CD8-positive, alpha-beta T cell (primary cell): ENCODE measurements at regions of chr10 and their contacts with region 1.

Region 1: DNA sequence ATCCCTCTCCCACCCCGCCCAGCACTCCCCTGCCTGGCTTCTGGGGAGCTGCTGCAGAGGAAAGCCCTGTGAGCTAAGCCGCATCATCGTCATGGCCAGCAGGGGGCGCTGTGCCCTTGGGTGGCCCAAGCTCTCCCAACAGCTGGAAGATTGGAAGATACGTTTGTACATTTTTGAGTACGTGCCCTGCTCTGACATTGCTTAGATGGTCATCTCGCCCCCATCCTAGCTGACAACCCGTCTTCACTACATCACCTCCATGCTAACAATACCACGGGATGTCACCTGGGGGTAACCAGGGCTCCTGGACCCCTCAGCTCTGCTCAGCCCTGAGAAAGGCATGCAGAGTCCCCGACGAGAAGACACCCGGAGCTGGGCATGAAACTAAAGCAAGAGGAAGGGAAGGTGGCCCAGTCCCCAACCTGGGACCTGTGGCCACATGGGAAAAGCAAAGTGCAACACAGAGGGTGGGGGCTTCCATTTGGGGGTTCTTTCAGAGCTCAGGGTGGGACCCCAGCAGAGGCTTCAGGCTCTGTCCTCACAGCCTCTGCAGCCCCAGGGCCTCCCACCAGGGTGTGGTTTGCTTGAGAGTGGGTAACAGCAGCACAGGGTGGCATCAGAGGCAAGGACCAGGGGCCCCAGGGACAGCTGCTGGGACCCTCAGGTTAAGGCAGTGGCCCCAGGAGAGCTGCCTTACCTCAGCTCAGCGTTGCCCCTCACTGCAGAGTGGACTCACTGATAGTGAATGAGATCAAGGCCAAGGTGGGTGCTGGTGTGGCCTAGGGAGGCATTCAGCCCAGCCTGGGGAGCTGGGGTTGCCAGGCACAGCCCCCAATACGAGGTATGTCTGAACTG is 136.7 kb downstream of the PTPN20 start:
- DNase-seq: peak; percentile 42 to 87 (median 72)
- ATAC-seq: peak; percentile 65
- H3K4me3 ChIP-seq: no peak overlapping the region
- H3K4me3 Mint-ChIP-seq: no peak overlapping the region
- H3K27ac ChIP-seq: no peak overlapping the region
- H3K27ac Mint-ChIP-seq: peak overlapping the region; percentile 49
- H3K4me1 ChIP-seq: peaks cover 16% of the 10 kb centered on the region
- H3K4me1 Mint-ChIP-seq: peaks cover 21% of the 10 kb centered on the region
- H3K27me3 ChIP-seq: no peaks in the 10 kb centered on the region
- H3K27me3 Mint-ChIP-seq: no peaks in the 10 kb centered on the region
- CTCF ChIP-seq: peak; percentile 73

Region 2: GRCh38 chr10:46255801-46256747 is 791.8 kb before region 1 on chr10:
- CTCF ChIA-PET with region 1: no interaction called
- POLR2A ChIA-PET with region 1: no interaction called
- intact Hi-C with region 1: no loop called
- DNase-seq: peak in 5 of 9 experiments; percentile 37 to 57 (median 49)
- ATAC-seq: no peak
- H3K4me3 ChIP-seq: no peak overlapping the region
- H3K4me3 Mint-ChIP-seq: no peak overlapping the region
- H3K27ac ChIP-seq: no peak overlapping the region
- H3K27ac Mint-ChIP-seq: peak overlapping the region; percentile 55
- H3K4me1 ChIP-seq: peaks cover 6% of the 10 kb centered on the region
- H3K4me1 Mint-ChIP-seq: peaks cover 50% of the 10 kb centered on the region
- H3K27me3 ChIP-seq: no peaks in the 10 kb centered on the region
- H3K27me3 Mint-ChIP-seq: no peaks in the 10 kb centered on the region
- CTCF ChIP-seq: peak; percentile 56

Region 3: GRCh38 chr10:46995234-46995633 is 52.7 kb before region 1 on chr10:
- CTCF ChIA-PET with region 1: no interaction called
- POLR2A ChIA-PET with region 1: no interaction called
- intact Hi-C with region 1: no loop called
- DNase-seq: no peak
- ATAC-seq: no peak
- H3K4me3 ChIP-seq: no peak overlapping the region
- H3K4me3 Mint-ChIP-seq: no peak overlapping the region
- H3K27ac ChIP-seq: no peak overlapping the region
- H3K27ac Mint-ChIP-seq: no peak overlapping the region
- H3K4me1 ChIP-seq: no peaks in the 10 kb centered on the region
- H3K4me1 Mint-ChIP-seq: no peaks in the 10 kb centered on the region
- H3K27me3 ChIP-seq: no peaks in the 10 kb centered on the region
- H3K27me3 Mint-ChIP-seq: peaks cover 5% of the 10 kb centered on the region
- CTCF ChIP-seq: no peak

Region 4: GRCh38 chr10:47024399-47025252 is 23.3 kb before region 1 on chr10:
- CTCF ChIA-PET with region 1: interaction called, 74 read pairs
- POLR2A ChIA-PET with region 1: no interaction called
- intact Hi-C with region 1: loop called (anchors 1 to 2 kb)
- DNase-seq: peak; percentile 19 to 81 (median 67)
- ATAC-seq: peak; percentile 75
- H3K4me3 ChIP-seq: no peak overlapping the region
- H3K4me3 Mint-ChIP-seq: no peak overlapping the region
- H3K27ac ChIP-seq: no peak overlapping the region
- H3K27ac Mint-ChIP-seq: no peak overlapping the region
- H3K4me1 ChIP-seq: no peaks in the 10 kb centered on the region
- H3K4me1 Mint-ChIP-seq: peaks cover 4% of the 10 kb centered on the region
- H3K27me3 ChIP-seq: peaks cover 0 to 5% of the 10 kb centered on the region in 2 experiments
- H3K27me3 Mint-ChIP-seq: peaks cover 5% of the 10 kb centered on the region
- CTCF ChIP-seq: peak; percentile 90

Region 5: DNA sequence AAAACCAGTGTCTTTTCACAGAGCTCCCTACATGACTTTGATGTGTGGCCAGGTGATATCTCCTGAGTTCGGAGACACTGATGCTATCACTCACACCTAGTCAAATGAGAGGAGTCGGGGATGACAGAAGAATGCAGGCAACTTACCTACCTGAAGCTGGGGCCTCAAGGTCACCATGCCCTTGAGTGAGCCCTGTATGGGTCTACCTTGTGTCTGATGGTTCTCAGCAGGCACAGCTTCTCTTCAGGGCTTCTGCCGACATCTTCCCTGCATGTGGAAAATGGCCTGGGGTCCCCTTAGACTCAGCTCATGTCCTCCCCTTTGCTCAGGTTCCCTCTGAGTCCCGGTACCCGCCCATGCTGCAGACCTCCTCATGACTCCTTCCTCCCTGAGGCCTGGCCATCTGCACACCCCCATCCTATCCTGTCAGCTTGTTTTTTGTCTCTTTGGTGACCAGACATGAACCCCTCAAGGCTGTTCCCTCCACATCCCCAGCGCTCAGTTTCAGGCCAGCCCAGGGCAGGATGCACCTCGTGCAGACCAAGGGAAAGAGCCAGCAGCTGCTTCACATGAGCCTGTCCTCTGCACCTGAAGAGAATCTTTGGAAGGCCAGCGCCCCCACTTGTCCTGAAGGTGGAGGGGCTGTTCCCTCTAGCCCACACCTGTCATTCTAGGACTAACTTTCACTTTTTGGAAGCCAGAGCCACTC is 177.5 kb after region 1 on chr10:
- CTCF ChIA-PET with region 1: interaction called, 12 read pairs
- POLR2A ChIA-PET with region 1: no interaction called
- intact Hi-C with region 1: loop called (anchors 2 to 5 kb)
- DNase-seq: no peak
- ATAC-seq: no peak
- H3K4me3 ChIP-seq: no peak overlapping the region
- H3K4me3 Mint-ChIP-seq: no peak overlapping the region
- H3K27ac ChIP-seq: no peak overlapping the region
- H3K27ac Mint-ChIP-seq: peak overlapping the region; percentile 66
- H3K4me1 ChIP-seq: peaks cover 3% of the 10 kb centered on the region
- H3K4me1 Mint-ChIP-seq: peaks cover 16% of the 10 kb centered on the region
- H3K27me3 ChIP-seq: no peaks in the 10 kb centered on the region
- H3K27me3 Mint-ChIP-seq: no peaks in the 10 kb centered on the region
- CTCF ChIP-seq: no peak

Region 6: DNA sequence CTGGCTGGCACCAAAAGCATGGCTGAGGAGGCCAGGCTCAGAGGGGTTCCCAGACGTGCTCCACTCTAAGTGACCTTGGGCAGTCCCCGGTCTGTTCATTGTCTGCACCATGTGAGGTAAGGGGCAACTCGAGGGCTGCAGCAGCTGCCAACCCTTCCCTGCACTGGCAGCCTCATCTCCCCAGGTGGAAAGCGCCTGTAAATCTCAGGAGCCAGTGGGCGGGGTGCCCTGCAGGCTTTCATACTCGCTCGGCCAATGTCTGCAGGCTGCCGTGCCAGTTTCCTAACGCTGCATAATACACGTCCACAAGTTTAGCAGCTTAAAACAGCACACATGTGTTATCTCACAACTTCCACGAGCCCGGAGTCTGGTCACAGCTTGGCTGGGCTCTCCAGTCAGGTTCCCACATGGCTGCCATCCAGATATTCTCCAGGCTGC is 239.5 kb after region 1 on chr10:
- CTCF ChIA-PET with region 1: interaction called, 11 read pairs
- POLR2A ChIA-PET with region 1: no interaction called
- intact Hi-C with region 1: no loop called
- DNase-seq: no peak
- ATAC-seq: no peak
- H3K4me3 ChIP-seq: no peak overlapping the region
- H3K4me3 Mint-ChIP-seq: no peak overlapping the region
- H3K27ac ChIP-seq: no peak overlapping the region
- H3K27ac Mint-ChIP-seq: peak overlapping the region; percentile 75
- H3K4me1 ChIP-seq: peaks cover 26% of the 10 kb centered on the region
- H3K4me1 Mint-ChIP-seq: peaks cover 37% of the 10 kb centered on the region
- H3K27me3 ChIP-seq: no peaks in the 10 kb centered on the region
- H3K27me3 Mint-ChIP-seq: no peaks in the 10 kb centered on the region
- CTCF ChIP-seq: no peak

Region 7: GRCh38 chr10:47306387-47307210 is 258.7 kb after region 1 on chr10:
- CTCF ChIA-PET with region 1: interaction called, 239 read pairs
- POLR2A ChIA-PET with region 1: interaction called, 22 read pairs
- intact Hi-C with region 1: no loop called
- DNase-seq: no peak
- ATAC-seq: no peak
- H3K4me3 ChIP-seq: no peak overlapping the region
- H3K4me3 Mint-ChIP-seq: no peak overlapping the region
- H3K27ac ChIP-seq: no peak overlapping the region
- H3K27ac Mint-ChIP-seq: peak overlapping the region; percentile 77
- H3K4me1 ChIP-seq: peaks cover 26% of the 10 kb centered on the region
- H3K4me1 Mint-ChIP-seq: peaks cover 59% of the 10 kb centered on the region
- H3K27me3 ChIP-seq: no peaks in the 10 kb centered on the region
- H3K27me3 Mint-ChIP-seq: no peaks in the 10 kb centered on the region
- CTCF ChIP-seq: no peak